Vagina (tissue), 2 donors: ENCODE measurements at regions of chr22 and their contacts with region 1.

Region 1: DNA sequence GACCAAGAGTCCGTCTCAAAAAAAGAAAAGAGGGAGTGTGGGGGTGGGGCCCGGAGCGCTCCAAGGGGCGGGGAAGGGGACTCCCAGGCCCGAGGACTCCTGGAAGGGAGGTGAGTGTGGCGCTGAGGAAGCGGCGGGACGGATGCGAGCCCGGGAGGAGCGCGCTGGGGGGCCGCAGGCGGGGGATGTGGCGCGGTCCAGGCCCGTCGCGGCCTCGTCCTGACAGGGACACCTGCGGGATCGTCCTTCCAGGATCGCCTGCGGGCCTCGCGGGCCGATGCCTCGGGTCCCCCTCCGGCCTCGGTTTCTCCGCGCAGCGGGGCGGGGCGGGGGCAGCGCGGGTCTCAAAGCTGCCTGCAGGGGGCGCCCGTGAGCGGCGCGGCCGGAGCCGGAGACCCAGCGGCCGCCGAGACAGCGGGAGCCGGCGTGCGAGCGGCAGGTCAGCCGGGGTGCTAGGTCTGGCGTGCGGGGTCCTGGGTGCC is 3.8 kb upstream of the ADORA2A start:
- DNase-seq: no peak
- H3K4me3 ChIP-seq: peak overlapping the region; percentile 49 to 51
- H3K27ac ChIP-seq: no peak overlapping the region
- H3K4me1 ChIP-seq: peaks cover 19% of the 10 kb centered on the region
- H3K27me3 ChIP-seq: no peaks in the 10 kb centered on the region
- CTCF ChIP-seq: peak; percentile 73 to 80 (median 77)
- POLR2A ChIP-seq: no peak

Region 2: DNA sequence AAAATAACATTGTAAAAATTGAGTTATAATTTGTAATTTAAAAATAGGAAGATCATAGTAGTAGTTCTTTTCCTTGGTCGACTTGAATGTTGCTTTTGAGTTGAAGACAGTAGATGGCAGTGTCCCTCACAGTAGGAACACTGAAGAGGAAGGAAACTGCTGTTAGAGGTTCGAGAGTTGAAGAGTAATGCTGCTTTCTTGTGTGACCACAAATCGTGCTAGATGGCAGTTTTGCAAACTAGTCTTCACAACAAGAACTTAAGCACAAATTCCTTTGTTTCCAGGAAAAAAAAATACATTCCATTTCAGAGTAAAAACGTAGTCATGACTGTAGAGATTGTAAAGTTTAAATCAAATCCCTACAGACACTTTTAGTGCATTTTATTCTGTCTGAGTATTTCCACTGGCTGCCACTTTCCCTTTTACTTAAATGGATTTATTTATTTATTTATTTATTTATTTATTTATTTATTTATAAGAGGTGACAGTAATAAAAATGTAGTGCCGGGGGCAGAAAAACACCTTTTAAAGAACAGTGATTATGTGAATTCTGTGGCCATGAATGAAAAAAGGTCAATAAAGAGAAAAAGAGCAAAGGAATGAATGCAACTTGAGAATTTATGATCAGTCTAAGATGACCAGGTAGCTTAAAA is 98.3 kb before region 1 on chr22:
- intact Hi-C with region 1: loop called (anchors 10 kb)
- DNase-seq: no peak
- H3K4me3 ChIP-seq: no peak overlapping the region
- H3K27ac ChIP-seq: no peak overlapping the region
- H3K4me1 ChIP-seq: peaks cover 24% of the 10 kb centered on the region
- H3K27me3 ChIP-seq: no peaks in the 10 kb centered on the region
- CTCF ChIP-seq: peak in 1 of 3 experiments; percentile 49
- POLR2A ChIP-seq: no peak

Region 3: GRCh38 chr22:24503137-24503842 is 79.7 kb after region 1 on chr22:
- intact Hi-C with region 1: loop called (anchors 5 kb)
- DNase-seq: no peak
- H3K4me3 ChIP-seq: no peak overlapping the region
- H3K27ac ChIP-seq: no peak overlapping the region
- H3K4me1 ChIP-seq: no peaks in the 10 kb centered on the region
- H3K27me3 ChIP-seq: no peaks in the 10 kb centered on the region
- CTCF ChIP-seq: peak; percentile 19 to 54 (median 22)
- POLR2A ChIP-seq: no peak